ENCODE measurements at regions of chr2 and their contacts with region 1.

Region 1: DNA sequence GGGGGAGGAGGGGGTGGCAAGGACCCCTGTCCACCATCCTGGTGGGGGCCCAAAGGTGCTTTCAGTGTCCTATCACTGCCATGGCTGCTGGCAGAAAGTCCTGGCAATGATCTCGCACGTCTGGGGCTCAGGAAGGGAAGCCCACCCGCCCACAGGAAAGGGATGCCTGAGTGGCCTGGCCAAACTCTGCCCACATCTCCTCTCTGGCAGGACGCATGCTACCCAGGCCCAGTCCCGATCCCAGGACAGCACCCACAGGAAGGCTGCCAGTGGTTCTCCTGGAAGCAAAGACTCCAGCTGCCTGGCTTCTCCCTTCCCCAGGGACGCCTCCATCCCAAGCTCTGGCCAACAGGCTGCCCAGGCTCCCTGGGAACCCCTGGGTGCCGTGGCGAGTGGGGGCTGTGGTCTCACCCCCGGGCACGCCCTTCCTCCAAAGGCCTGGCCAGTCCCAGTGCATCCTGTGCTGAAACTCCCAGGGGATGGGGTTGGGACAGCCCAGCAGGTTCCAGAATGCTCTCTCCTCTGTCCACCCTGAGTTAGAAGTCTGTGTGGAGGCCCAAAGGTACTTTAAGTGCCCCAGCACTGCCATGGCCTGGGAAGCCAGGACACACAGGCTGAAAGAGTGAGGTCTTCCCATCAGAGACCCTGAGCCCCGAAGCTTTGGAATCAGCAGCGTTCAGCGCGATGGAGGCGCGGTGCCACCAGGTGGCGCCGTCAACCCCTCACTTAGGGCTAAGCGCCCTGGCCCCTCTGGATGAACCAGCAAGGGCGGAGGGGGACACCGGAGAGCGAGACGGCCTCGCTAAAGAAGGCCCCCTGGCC is 29.8 kb upstream of the TAF1B start:
- DNase-seq: peak; percentile 82
- ATAC-seq: peak; percentile 97
- H3K4me3 Mint-ChIP-seq: no peak overlapping the region
- H3K27ac Mint-ChIP-seq: peak overlapping the region; percentile 71
- H3K4me1 Mint-ChIP-seq: peaks cover 20% of the 10 kb centered on the region
- H3K27me3 Mint-ChIP-seq: peaks cover 7% of the 10 kb centered on the region

Region 2: DNA sequence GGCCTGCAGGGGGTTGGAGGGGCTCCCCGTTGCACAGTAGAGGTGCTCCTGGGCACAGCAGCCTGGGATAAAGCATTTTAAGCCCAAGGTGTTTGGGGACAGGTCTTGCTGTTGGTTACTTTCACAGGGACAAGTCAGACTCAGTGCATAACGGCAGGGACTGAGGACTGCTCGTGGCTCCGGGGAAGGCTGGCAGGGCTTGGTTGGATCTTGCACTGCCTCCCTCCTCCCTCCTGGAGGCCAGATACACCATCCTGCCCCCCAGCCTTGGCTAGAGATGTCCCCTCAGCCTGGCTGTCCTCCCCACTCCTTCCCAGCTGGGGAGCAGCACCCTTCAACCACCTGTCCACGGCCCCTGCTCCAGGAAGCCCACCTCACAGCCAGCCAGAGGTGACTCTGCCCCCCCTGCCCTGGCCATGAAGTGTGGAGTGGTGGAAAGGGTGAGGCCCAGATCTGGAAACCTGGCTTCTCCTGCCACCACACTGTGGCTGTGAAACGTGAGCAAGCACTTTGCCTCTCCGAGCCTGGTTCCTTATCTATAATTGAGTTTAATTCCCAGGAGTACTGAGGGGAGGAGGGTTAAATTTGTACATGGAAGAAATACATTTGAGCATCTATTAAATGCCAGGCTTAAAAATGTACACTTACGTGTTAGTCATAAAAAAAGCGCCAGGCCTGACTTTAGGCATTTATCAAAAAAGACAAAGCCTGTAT is 37.4 kb before region 1 on chr2:
- CTCF ChIA-PET with region 1: no interaction called
- DNase-seq: no peak
- ATAC-seq: no peak
- H3K4me3 Mint-ChIP-seq: no peak overlapping the region
- H3K27ac Mint-ChIP-seq: no peak overlapping the region
- H3K4me1 Mint-ChIP-seq: peaks cover 35% of the 10 kb centered on the region
- H3K27me3 Mint-ChIP-seq: no peaks in the 10 kb centered on the region

Region 3: DNA sequence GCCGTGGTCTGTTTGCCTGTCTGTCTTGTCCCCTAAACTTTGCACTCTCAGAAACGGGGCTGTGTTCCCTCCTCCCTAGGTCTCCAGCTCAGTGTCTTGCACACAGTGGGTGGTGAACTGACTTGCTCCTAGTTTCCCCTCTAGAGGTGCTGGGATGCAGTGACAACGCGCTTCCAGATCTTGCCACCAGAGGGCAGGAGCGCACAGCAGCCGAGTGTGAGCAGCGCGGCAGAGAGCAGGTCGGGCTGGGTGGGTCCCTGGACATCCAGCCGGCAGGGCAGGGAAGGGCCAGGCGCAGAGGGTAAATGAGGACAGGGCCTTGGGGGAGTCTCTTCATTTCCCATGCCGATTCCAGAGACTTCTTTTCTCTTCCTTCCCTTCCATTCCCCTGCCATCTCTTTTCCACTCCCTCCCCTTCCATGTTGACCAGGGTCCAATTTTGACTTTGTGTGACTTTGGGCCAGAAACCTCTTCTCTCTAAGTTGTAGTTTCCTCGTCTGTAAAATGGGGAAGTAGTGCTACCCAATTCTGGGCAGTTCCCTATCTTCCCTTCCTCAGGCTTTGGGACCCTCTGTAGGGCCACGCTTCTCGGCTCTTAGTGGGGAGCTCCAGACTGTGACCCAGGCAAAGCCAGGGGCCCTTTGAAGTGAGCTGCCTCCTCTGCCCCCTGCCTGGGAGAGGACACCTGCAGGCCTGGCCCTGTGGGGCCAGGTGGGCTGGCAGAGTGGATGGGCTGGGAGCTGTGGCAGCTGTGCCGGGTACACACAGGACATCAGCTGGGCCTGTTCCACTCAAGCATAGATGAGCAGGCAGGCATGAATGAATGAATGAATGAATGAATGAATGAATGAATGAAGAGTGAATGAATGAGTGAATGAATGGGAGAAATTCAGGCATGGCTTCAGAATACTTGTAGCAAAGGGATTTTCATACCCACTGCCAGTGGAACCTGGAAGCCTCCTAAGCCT is 13.6 kb before region 1 on chr2:
- CTCF ChIA-PET with region 1: interaction called, 78 read pairs
- DNase-seq: peak; percentile 93
- ATAC-seq: peak; percentile 92
- H3K4me3 Mint-ChIP-seq: peak overlapping the region; percentile 57
- H3K27ac Mint-ChIP-seq: peak overlapping the region; percentile 91
- H3K4me1 Mint-ChIP-seq: peaks cover 44% of the 10 kb centered on the region
- H3K27me3 Mint-ChIP-seq: peaks cover 8% of the 10 kb centered on the region

Region 4: GRCh38 chr2:9836524-9836923 is 23.0 kb after region 1 on chr2:
- CTCF ChIA-PET with region 1: interaction called, 10 read pairs
- DNase-seq: no peak
- ATAC-seq: no peak
- H3K4me3 Mint-ChIP-seq: no peak overlapping the region
- H3K27ac Mint-ChIP-seq: no peak overlapping the region
- H3K4me1 Mint-ChIP-seq: no peaks in the 10 kb centered on the region
- H3K27me3 Mint-ChIP-seq: peaks cover 15% of the 10 kb centered on the region

Region 5: GRCh38 chr2:9889812-9890261 is 76.3 kb after region 1 on chr2:
- CTCF ChIA-PET with region 1: interaction called, 11 read pairs
- DNase-seq: no peak
- ATAC-seq: no peak
- H3K4me3 Mint-ChIP-seq: no peak overlapping the region
- H3K27ac Mint-ChIP-seq: no peak overlapping the region
- H3K4me1 Mint-ChIP-seq: peaks cover 24% of the 10 kb centered on the region
- H3K27me3 Mint-ChIP-seq: no peaks in the 10 kb centered on the region

Region 6: GRCh38 chr2:9914384-9915065 is 101.0 kb after region 1 on chr2:
- CTCF ChIA-PET with region 1: interaction called, 22 read pairs
- DNase-seq: peak; percentile 82
- ATAC-seq: peak; percentile 100
- H3K4me3 Mint-ChIP-seq: no peak overlapping the region
- H3K27ac Mint-ChIP-seq: no peak overlapping the region
- H3K4me1 Mint-ChIP-seq: peaks cover 13% of the 10 kb centered on the region
- H3K27me3 Mint-ChIP-seq: no peaks in the 10 kb centered on the region

Region 7: DNA sequence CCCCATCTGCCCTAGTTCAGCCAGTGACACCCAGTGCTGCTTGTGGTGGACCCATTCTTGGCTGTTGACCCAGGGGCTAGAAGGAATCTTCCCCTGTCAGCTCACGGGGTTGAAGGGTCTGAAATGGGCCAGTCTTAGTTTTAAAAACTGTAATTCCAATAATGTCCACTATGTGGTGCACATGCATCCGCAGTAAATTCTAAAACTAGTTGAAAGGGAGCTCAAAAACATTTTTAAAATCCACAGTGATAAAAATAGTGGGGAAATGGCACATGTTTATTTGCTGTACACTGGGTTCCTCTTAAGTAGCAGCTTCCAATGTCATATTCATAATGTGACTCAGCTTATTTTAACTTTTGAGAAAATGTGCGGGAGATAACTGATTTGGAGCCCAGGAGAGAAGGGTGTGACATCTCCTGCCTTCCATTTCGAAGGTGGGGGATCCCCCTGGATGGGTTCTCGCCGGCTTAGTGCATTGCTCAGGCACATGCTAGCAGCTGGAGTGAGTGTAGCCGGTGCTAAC is 170.8 kb after region 1 on chr2:
- CTCF ChIA-PET with region 1: interaction called, 38 read pairs
- DNase-seq: no peak
- ATAC-seq: peak; percentile 78
- H3K4me3 Mint-ChIP-seq: no peak overlapping the region
- H3K27ac Mint-ChIP-seq: no peak overlapping the region
- H3K4me1 Mint-ChIP-seq: peaks cover 13% of the 10 kb centered on the region
- H3K27me3 Mint-ChIP-seq: peaks cover 28% of the 10 kb centered on the region

Region 8: GRCh38 chr2:10043906-10044601 is 230.5 kb after region 1 on chr2:
- CTCF ChIA-PET with region 1: interaction called, 95 read pairs
- DNase-seq: peak; percentile 96
- ATAC-seq: peak; percentile 73
- H3K4me3 Mint-ChIP-seq: peak overlapping the region; percentile 68
- H3K27ac Mint-ChIP-seq: peak overlapping the region; percentile 79
- H3K4me1 Mint-ChIP-seq: peaks cover 13% of the 10 kb centered on the region
- H3K27me3 Mint-ChIP-seq: peaks cover 21% of the 10 kb centered on the region

Measured in activated CD8-positive, alpha-beta memory T cell treated with anti-CD3 and anti-CD28 coated beads, Interleukin-2, amount 10 ng/mL, durations not matched to agents 7 days and 5 days (primary cell).